ENCODE measurements at regions of chr13 and their contacts with region 1.

Region 1: GRCh38 chr13:99269627-99270241 is 11.6 kb upstream of the GPR18 start:
- DNase-seq: peak in 2 of 5 donors; percentile 52 to 53
- H3K4me3 ChIP-seq: no peak overlapping the region
- H3K4me3 Mint-ChIP-seq: peak overlapping the region in 1 of 7 donors; percentile 18
- H3K27ac ChIP-seq: no peak overlapping the region
- H3K27ac Mint-ChIP-seq: peak overlapping the region in 7 of 8 donors; percentile 50 to 99 (median 82)
- H3K4me1 ChIP-seq: peaks cover 56% of the 10 kb centered on the region
- H3K4me1 Mint-ChIP-seq: peaks cover 65 to 74% (median 72%) of the 10 kb centered on the region in 3 donors
- H3K27me3 ChIP-seq: no peaks in the 10 kb centered on the region
- H3K27me3 Mint-ChIP-seq: no peaks in the 10 kb centered on the region

Region 2: GRCh38 chr13:99133230-99133629 is 136.5 kb before region 1 on chr13:
- CTCF ChIA-PET with region 1: no interaction called
- POLR2A ChIA-PET with region 1: no interaction called
- DNase-seq: no peak
- H3K4me3 ChIP-seq: no peak overlapping the region
- H3K4me3 Mint-ChIP-seq: no peak overlapping the region
- H3K27ac ChIP-seq: no peak overlapping the region
- H3K27ac Mint-ChIP-seq: peak overlapping the region in 1 of 8 donors; percentile 59
- H3K4me1 ChIP-seq: no peaks in the 10 kb centered on the region
- H3K4me1 Mint-ChIP-seq: no peaks in the 10 kb centered on the region
- H3K27me3 ChIP-seq: no peaks in the 10 kb centered on the region
- H3K27me3 Mint-ChIP-seq: peaks cover 0 to 2% of the 10 kb centered on the region in 2 donors

Region 3: DNA sequence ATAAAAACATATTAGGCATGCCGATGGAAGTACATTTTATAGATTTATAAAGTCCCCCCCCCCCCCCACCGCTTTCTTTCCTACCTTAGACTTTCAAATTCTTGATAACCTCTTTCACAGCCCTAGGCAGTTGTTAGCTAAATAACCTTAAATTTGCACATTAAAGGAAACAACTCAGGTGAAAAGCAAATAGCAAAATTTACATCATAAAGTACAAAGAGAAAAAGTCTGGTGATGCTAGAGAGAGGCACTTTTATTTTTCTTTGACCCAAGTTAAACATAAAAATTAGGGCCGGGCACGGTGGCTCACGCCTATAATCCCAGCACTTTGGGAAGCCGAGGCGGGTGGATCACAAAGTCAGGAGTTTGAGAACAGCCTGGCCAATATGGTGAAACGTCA is 84.1 kb before region 1 on chr13:
- CTCF ChIA-PET with region 1: interaction called, 276 read pairs
- POLR2A ChIA-PET with region 1: no interaction called
- DNase-seq: no peak
- H3K4me3 ChIP-seq: no peak overlapping the region
- H3K4me3 Mint-ChIP-seq: no peak overlapping the region
- H3K27ac ChIP-seq: no peak overlapping the region
- H3K27ac Mint-ChIP-seq: no peak overlapping the region
- H3K4me1 ChIP-seq: no peaks in the 10 kb centered on the region
- H3K4me1 Mint-ChIP-seq: peaks cover 3 to 5% (median 4%) of the 10 kb centered on the region in 3 donors
- H3K27me3 ChIP-seq: no peaks in the 10 kb centered on the region
- H3K27me3 Mint-ChIP-seq: no peaks in the 10 kb centered on the region

Region 4: DNA sequence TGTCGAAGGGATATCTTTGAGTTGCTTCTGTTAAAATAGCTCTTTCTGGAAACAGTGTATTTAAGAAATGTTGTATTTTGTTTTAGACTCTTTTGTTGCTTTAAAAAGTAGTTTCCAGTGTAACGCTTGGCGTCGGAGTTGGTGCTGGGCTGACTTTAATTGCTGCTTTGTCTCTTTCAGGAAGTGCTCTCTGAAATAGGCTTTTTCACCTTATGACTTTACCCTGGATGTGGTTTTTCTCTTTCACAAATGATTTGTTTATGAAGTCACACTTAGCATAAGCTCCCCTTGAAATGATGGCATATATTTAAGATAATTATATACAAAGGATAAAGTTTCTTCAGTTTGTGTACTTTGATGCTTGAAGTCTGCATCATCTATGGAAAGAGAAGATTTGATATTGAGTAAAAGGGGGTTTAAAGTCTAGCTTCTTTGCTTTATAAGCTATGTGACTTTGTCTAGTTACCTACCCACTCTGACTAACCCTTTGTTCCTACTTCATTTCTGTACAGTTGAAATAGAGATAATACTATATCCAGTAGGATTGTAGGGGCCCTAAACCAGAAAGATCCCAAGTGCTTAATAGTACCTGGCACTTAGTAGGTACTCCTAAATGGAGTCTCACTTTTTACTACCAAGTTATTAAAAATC is 11.4 kb before region 1 on chr13 and contains the start of gene GPR18:
- CTCF ChIA-PET with region 1: interaction called, 13 read pairs
- POLR2A ChIA-PET with region 1: interaction called, 6 read pairs
- DNase-seq: peak in 4 of 5 donors; percentile 16 to 73 (median 58)
- H3K4me3 ChIP-seq: peak within 1 kb of the TSS; percentile 74
- H3K4me3 Mint-ChIP-seq: peak within 1 kb of the TSS; percentile 91 to 98 (median 96)
- H3K27ac ChIP-seq: peak within 1 kb of the TSS; percentile 39
- H3K27ac Mint-ChIP-seq: peak within 1 kb of the TSS; percentile 89 to 99 (median 96)
- H3K4me1 ChIP-seq: peaks cover 63% of the 10 kb centered on the region
- H3K4me1 Mint-ChIP-seq: peaks cover 65 to 83% (median 78%) of the 10 kb centered on the region in 3 donors
- H3K27me3 ChIP-seq: no peaks in the 10 kb centered on the region
- H3K27me3 Mint-ChIP-seq: no peaks in the 10 kb centered on the region
- total RNA-seq, gene GPR18: 15.2 to 16.2 TPM

Region 5: GRCh38 chr13:99322297-99323103 is 52.8 kb after region 1 on chr13:
- CTCF ChIA-PET with region 1: interaction called, 28 read pairs
- POLR2A ChIA-PET with region 1: interaction called, 6 read pairs
- DNase-seq: peak in 3 of 5 donors; percentile 48 to 61 (median 54)
- H3K4me3 ChIP-seq: peak overlapping the region; percentile 4
- H3K4me3 Mint-ChIP-seq: peak overlapping the region; percentile 14 to 80 (median 61)
- H3K27ac ChIP-seq: peak overlapping the region; percentile 7
- H3K27ac Mint-ChIP-seq: peak overlapping the region; percentile 90 to 98 (median 96)
- H3K4me1 ChIP-seq: peaks cover 78% of the 10 kb centered on the region
- H3K4me1 Mint-ChIP-seq: peaks cover 71 to 88% (median 84%) of the 10 kb centered on the region in 3 donors
- H3K27me3 ChIP-seq: no peaks in the 10 kb centered on the region
- H3K27me3 Mint-ChIP-seq: no peaks in the 10 kb centered on the region

Region 6: DNA sequence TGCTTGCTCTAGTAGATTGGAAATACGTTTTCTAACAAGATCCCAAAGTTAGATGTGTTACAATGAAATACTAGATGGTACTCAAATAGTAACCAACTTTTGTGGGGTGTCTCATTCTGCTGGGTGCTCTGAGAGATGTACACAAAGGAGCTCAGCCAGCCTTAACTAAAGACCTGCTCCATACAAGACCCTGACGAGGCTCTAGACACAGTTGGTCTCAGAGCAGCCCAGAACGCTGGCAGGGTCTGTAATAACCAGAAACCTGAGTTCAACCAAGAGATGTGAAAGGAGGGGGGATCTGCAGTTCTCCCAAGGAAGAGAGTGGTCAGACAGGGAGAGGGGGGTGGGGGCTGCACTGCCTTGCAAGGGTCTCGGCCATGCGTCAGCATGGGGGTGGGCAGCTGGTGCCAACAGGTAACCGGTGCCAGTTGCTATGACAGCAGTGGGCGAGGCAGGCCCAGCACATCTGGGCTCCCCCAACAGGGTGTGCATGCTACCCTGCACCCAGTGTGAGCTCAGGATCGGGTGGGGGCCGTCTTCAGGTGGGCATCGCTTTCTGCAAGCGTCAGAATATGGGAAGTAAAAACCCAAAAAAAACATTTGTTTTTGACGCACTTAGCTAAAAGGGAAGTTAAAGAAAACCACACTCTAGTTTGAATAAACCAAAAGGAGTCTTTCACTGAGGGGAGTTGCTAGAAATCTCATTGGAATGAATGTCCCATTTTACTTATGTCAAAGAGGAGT is 105.4 kb after region 1 on chr13:
- CTCF ChIA-PET with region 1: interaction called, 18 read pairs
- POLR2A ChIA-PET with region 1: interaction called, 3 read pairs
- DNase-seq: peak in 4 of 5 donors; percentile 37 to 91 (median 88)
- H3K4me3 ChIP-seq: peak overlapping the region; percentile 15
- H3K4me3 Mint-ChIP-seq: peak overlapping the region; percentile 55 to 83 (median 75)
- H3K27ac ChIP-seq: peak overlapping the region; percentile 33
- H3K27ac Mint-ChIP-seq: peak overlapping the region; percentile 92 to 99 (median 97)
- H3K4me1 ChIP-seq: peaks cover 90% of the 10 kb centered on the region
- H3K4me1 Mint-ChIP-seq: peaks cover 82 to 98% (median 97%) of the 10 kb centered on the region in 3 donors
- H3K27me3 ChIP-seq: no peaks in the 10 kb centered on the region
- H3K27me3 Mint-ChIP-seq: peaks cover 0 to 4% of the 10 kb centered on the region in 2 donors

Region 7: GRCh38 chr13:99418103-99418842 is 148.5 kb after region 1 on chr13:
- CTCF ChIA-PET with region 1: interaction called, 13 read pairs
- POLR2A ChIA-PET with region 1: interaction called, 3 read pairs
- DNase-seq: no peak
- H3K4me3 ChIP-seq: peak overlapping the region; percentile 40
- H3K4me3 Mint-ChIP-seq: no peak overlapping the region
- H3K27ac ChIP-seq: no peak overlapping the region
- H3K27ac Mint-ChIP-seq: peak overlapping the region in 3 of 8 donors; percentile 1 to 77 (median 55)
- H3K4me1 ChIP-seq: peaks cover 74% of the 10 kb centered on the region
- H3K4me1 Mint-ChIP-seq: peaks cover 37 to 51% (median 47%) of the 10 kb centered on the region in 3 donors
- H3K27me3 ChIP-seq: no peaks in the 10 kb centered on the region
- H3K27me3 Mint-ChIP-seq: no peaks in the 10 kb centered on the region

Region 8: DNA sequence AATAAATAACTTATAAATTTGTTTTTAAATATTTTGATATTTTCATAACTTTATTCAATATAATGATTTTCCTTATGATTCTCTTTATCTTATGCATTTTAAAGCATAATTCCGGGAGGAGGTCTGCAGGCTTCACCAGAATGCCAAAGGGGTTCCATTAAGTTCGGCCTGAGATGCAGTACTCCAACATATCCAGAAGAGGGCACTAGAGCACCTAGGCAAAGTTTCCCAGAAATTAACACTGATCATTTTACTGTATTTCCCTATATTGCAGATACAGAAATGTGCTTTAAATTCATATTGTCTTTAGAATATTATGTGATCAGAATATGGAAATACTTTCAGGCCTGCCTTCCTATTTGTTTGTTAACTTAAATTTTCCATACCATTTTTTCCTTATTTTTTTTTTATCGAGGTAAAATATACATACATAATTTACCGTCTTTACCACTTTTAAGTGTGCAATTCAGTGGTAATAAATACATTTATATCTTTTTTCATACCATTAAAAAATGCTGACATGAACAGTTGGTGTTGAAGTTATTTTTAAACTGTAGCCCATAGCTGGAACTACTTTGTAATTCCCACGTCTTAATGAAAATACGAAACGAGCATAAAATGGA is 172.7 kb after region 1 on chr13:
- CTCF ChIA-PET with region 1: interaction called, 260 read pairs
- POLR2A ChIA-PET with region 1: interaction called, 3 read pairs
- DNase-seq: peak in 4 of 5 donors; percentile 47 to 75 (median 58)
- H3K4me3 ChIP-seq: no peak overlapping the region
- H3K4me3 Mint-ChIP-seq: no peak overlapping the region
- H3K27ac ChIP-seq: no peak overlapping the region
- H3K27ac Mint-ChIP-seq: no peak overlapping the region
- H3K4me1 ChIP-seq: no peaks in the 10 kb centered on the region
- H3K4me1 Mint-ChIP-seq: peaks cover 6% of the 10 kb centered on the region in 3 donors
- H3K27me3 ChIP-seq: no peaks in the 10 kb centered on the region
- H3K27me3 Mint-ChIP-seq: no peaks in the 10 kb centered on the region

Region 9: DNA sequence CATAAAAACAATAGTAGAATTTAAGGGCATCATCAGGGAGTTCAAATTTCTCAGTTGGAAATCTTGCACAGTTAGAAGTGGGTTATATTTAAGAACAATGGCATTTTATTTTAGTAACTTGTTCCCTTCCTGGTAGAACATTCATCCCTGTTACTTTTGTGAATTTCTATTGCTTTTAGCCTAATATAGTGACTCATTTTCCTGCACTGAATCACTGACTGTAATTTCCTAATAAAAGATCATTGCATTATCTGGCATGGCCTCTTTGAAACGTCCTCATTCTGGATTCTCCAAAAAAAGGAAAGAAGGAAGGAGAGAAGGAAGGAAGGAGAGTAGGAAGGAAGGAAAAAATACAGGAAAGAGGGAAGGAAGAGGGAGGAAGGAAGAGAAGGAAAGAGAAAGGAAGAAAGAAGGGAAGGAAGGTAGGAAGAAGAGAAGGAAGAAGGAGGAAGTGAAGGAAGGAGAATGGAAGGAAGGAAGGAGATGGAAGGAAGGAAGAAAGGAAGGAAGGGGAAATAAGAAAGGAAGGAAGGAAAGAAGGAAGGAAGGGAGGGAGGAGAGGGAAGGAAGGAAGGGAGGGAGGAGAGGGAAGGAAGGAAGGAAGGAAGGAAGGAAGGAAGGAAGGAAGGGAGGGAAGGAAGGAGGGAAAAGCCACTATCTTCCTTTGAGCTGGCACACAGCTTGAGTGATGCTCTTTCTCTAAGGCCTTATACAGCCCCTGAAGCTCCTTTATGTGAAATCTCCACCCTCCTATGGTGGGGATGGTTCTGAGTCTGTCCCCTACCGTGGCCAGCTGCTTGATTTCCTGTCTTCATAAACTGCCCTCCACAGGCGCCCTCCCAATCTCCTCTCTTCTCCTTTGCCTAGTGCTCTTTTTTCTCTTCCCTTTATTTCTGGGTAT is 201.7 kb after region 1 on chr13:
- CTCF ChIA-PET with region 1: no interaction called
- POLR2A ChIA-PET with region 1: no interaction called
- DNase-seq: no peak
- H3K4me3 ChIP-seq: no peak overlapping the region
- H3K4me3 Mint-ChIP-seq: no peak overlapping the region
- H3K27ac ChIP-seq: no peak overlapping the region
- H3K27ac Mint-ChIP-seq: peak overlapping the region in 2 of 8 donors; percentile 28 to 66
- H3K4me1 ChIP-seq: no peaks in the 10 kb centered on the region
- H3K4me1 Mint-ChIP-seq: peaks cover 0 to 2% (median 1%) of the 10 kb centered on the region in 3 donors
- H3K27me3 ChIP-seq: no peaks in the 10 kb centered on the region
- H3K27me3 Mint-ChIP-seq: peaks cover 5 to 9% of the 10 kb centered on the region in 2 donors

Measured in CD8-positive, alpha-beta memory T cell (primary cell).